GM23248 (cell line): ENCODE measurements at regions of chr20 and their contacts with region 1.

Region 1: GRCh38 chr20:4174909-4175308 is 159.6 kb upstream of the RNF24 start:
- DNase-seq: no peak
- H3K4me3 ChIP-seq: no peak overlapping the region
- H3K27ac ChIP-seq: no peak overlapping the region
- H3K4me1 ChIP-seq: peaks cover 11% of the 10 kb centered on the region; the same call in 1 of the 2 replicates
- H3K27me3 ChIP-seq: no peaks in the 10 kb centered on the region

Region 2: DNA sequence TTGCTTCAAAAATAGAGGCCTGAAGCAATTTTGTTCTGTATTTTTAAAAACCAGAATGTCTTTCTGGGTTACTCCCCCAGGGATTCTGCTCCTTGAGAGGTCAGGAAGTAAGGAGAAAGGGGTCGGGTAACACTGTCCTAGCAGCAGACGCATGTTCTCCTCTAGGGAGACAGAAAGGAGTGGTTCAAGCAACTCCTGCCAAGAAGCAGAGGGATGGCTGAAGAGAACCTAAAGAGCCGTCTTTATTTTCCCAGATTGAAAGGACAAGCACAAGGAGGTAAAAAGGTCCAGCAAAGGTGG is 877.9 kb before region 1 on chr20:
- in situ Hi-C with region 1: no loop called
- DNase-seq: no peak
- H3K4me3 ChIP-seq: no peak overlapping the region
- H3K27ac ChIP-seq: no peak overlapping the region
- H3K4me1 ChIP-seq: no peaks in the 10 kb centered on the region
- H3K27me3 ChIP-seq: no peaks in the 10 kb centered on the region

Region 3: GRCh38 chr20:3970016-3970415 is 204.9 kb before region 1 on chr20:
- in situ Hi-C with region 1: no loop called
- DNase-seq: no peak
- H3K4me3 ChIP-seq: no peak overlapping the region
- H3K27ac ChIP-seq: no peak overlapping the region
- H3K4me1 ChIP-seq: no peaks in the 10 kb centered on the region
- H3K27me3 ChIP-seq: no peaks in the 10 kb centered on the region

Region 4: DNA sequence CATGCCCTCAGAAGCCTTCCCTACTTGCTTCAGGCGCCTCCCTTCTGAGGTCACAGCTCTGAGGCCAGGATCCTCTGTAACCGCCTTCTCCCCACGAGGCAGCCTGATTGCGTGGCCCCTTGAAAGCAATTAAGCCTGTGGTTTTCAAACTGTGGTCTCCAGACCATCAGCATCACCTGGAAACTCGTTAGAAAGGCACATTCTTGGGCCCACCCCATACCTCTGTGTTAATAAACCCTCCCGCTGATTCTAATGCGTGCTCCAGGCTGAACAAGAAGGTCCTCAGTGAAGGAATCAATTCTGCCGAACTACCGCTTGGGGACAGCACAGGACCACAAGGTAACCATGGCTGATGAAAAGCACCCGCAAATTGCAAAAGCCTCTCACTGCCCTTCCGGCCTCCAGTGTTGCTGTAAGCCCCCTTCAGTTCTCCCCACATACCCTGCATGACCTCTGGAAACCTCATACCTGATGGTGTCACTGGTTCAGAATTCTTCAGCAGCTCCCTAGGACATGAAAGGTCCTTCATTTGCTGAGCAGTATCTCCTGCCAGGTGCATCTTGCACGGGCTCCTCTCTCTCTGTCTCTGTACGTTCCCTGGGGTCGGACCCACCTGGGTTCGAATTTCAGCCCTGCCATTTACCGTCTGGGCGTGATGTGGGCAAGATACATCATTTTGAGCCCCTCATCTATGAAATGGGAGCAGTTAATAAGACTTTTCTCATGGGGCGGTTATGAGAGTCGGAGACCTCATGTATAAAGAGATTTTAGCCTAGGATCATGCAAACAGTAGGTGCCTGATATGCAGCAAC is 66.2 kb before region 1 on chr20:
- in situ Hi-C with region 1: loop called (anchors 5 kb)
- DNase-seq: peak; percentile 86
- H3K4me3 ChIP-seq: peak overlapping the region; percentile 37; the same call in 1 of the 2 replicates
- H3K27ac ChIP-seq: no peak overlapping the region
- H3K4me1 ChIP-seq: peaks cover 5% of the 10 kb centered on the region; the same call in 1 of the 2 replicates
- H3K27me3 ChIP-seq: no peaks in the 10 kb centered on the region

Region 5: GRCh38 chr20:4375881-4376280 is 201.0 kb after region 1 on chr20:
- in situ Hi-C with region 1: no loop called
- DNase-seq: peak; percentile 39
- H3K4me3 ChIP-seq: no peak overlapping the region
- H3K27ac ChIP-seq: no peak overlapping the region
- H3K4me1 ChIP-seq: 0 out of 2 replicates have a peak, but pooled peaks cover 7% of the 10 kb centered on the region
- H3K27me3 ChIP-seq: no peaks in the 10 kb centered on the region